ENCODE measurements at regions of chr1 and their contacts with region 1.

Region 1: DNA sequence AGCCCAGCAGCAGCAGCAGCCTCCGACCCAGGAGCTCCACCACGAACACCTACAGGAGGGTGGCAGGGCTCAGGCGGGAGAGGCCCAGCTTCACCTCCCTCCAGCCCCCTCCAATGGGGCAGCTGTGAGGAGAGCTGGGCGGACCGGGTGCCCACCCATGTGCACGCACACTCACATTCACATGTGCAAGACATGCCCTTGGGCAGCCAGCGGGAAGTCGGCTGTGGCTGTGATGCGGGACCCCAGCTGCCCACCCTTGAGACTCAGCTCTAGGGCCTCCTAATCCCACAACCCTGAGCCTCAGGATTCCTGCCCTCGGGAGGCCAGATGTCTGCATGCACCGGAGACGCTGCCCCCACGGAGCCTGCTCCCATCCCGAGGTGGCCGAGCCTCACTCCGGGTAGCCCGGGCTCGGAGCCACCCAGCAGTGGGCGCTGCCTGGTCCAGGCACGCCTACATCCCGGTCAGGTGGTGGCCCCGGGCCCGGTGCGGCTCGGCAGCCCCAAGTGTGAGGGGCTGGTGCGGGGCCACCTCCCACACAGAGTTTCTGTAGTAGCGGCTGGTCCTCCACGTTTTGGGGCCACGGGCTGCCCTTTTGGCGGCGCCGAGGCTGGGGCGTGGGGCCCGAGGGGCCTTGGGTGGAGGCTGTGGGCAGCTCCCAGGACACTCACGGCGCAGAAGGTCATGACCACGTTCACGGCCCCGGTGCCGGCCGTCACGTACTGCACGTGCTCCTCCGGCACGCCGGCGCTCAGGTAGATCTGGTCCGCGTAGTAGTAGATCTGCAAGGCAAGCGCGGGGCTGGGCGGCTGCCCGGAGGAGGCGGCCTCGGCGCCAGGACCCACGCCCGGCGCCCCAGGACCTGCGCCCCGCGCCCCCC is 12.9 kb upstream of the SLC2A7 start:
- DNase-seq: no peak
- H3K4me3 ChIP-seq: no peak overlapping the region
- H3K27ac ChIP-seq: no peak overlapping the region
- H3K4me1 ChIP-seq: no peaks in the 10 kb centered on the region
- H3K27me3 ChIP-seq: peaks cover 25% of the 10 kb centered on the region
- CTCF ChIP-seq: no peak

Region 2: GRCh38 chr1:9249534-9250410 is 210.7 kb after region 1 on chr1:
- CTCF ChIA-PET with region 1: no interaction called
- POLR2A ChIA-PET with region 1: interaction called, 13 read pairs
- intact Hi-C with region 1: no loop called
- DNase-seq: peak; percentile 35
- H3K4me3 ChIP-seq: no peak overlapping the region
- H3K27ac ChIP-seq: no peak overlapping the region
- H3K4me1 ChIP-seq: peaks cover 20% of the 10 kb centered on the region
- H3K27me3 ChIP-seq: peaks cover 30% of the 10 kb centered on the region
- CTCF ChIP-seq: peak; percentile 64